ENCODE measurements at regions of chr17 and their contacts with region 1.

Region 1: DNA sequence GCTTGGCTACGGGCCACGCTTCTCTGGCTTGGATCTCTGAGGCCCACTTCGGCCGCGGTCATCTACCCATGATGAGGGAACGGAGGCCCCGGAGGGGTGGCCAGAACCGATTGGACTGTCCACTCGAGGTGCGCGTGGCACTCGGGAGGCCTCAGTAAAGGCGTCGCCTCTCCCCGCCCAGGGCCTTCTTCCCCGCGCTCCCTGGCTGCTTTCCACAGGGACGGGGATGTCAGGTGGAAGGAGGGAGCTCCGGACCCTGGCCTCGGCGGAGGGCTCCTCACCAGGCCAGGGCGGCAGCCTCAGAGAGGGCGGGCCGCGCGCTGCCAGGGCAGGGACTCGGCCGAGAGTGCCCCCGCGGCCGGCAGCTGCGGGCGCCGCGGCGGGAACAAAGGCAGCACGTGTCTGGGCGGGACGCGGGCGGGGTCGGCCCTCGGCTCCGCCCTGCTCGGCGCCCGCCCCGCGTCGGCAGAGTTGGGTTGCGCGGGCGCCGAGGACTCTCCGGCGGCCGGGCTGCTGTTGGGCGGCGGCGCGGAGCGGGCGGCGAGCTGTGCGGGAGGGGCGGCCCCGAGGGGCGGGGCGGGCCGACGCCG is 587 bp upstream of the CDK5R1 start:
- DNase-seq: peak; percentile 76 to 77
- ATAC-seq: peak; percentile 65 to 82
- H3K4me3 ChIP-seq: peak overlapping the region; percentile 94
- H3K27ac ChIP-seq: peak overlapping the region; percentile 86 to 92
- H3K4me1 ChIP-seq: peaks cover 6% of the 10 kb centered on the region; the same call in 1 of the 3 replicates
- CTCF ChIP-seq: no peak
- EP300 ChIP-seq: no peak
- POLR2A ChIP-seq: no peak
- RAD21 ChIP-seq: no peak

Region 2: GRCh38 chr17:32470405-32471167 is 15.6 kb before region 1 on chr17:
- CTCF ChIA-PET with region 1: interaction called, 298 read pairs
- POLR2A ChIA-PET with region 1: interaction called, 3 read pairs
- DNase-seq: no peak
- ATAC-seq: no peak
- H3K4me3 ChIP-seq: no peak overlapping the region
- H3K27ac ChIP-seq: no peak overlapping the region
- H3K4me1 ChIP-seq: no peaks in the 10 kb centered on the region
- CTCF ChIP-seq: no peak
- EP300 ChIP-seq: no peak
- POLR2A ChIP-seq: no peak
- RAD21 ChIP-seq: no peak

Measured in A549 (cell line).